Activated T-helper 2 cell treated with anti-CD3 and anti-CD28 coated beads, Interferon-gamma antibody, Interleukin-2, Interleukin-4, amounts not matched to agents 10 μg/mL and 5 μg/mL and 100 μg/mL, durations not matched to agents 14 hours and 24 hours and 36 hours (primary cell): ENCODE measurements at regions of chr9 and their contacts with region 1.

Region 1: DNA sequence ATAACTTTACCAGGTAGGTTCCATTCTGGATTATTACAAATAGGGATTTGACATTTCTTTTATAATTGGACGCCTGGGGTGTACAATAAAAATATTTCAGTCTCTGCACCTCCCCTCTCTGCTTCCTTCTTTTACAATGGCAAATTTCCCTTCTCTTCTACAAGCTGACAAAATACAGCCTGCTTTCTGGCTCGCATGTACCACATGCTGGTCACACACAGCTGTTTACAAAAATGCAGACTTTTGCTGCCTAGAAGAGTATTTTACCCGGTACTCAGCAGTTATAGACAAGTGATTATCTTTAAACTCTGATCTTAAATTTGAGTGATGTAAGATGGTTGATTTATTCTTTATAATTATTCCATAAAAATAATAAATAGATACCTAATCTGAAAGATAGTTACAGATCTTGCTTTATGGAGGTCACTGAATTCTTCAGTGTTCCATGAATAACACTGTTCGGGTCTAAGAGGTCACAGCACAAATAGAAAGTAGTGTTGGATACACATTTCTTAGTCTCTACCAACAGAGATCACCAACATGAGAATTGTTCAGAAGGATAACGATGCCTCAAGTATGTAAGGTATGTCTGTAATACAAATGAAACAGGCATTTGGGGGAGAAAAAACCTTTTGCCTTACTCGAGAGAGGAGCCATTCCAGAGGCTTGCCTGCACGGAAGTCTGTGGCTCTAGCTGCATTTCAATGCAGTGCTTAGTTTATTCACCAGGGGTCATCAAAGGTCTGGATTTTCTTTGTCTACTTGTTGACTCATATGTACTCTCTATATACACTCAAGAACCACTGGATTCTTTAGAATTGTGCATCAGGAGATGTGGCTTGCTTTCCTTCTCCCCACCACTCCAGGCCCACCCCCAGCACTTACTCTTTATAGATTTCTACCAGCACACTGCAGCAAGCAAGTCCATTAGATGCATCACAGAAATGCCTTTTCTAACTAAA is 206.6 kb upstream of the RFX3 start:
- DNase-seq: peak; percentile 42
- H3K4me3 Mint-ChIP-seq: peak overlapping the region; percentile 20
- H3K27ac Mint-ChIP-seq: peak overlapping the region; percentile 49
- H3K4me1 Mint-ChIP-seq: peaks cover 51% of the 10 kb centered on the region
- H3K27me3 Mint-ChIP-seq: no peaks in the 10 kb centered on the region

Region 2: DNA sequence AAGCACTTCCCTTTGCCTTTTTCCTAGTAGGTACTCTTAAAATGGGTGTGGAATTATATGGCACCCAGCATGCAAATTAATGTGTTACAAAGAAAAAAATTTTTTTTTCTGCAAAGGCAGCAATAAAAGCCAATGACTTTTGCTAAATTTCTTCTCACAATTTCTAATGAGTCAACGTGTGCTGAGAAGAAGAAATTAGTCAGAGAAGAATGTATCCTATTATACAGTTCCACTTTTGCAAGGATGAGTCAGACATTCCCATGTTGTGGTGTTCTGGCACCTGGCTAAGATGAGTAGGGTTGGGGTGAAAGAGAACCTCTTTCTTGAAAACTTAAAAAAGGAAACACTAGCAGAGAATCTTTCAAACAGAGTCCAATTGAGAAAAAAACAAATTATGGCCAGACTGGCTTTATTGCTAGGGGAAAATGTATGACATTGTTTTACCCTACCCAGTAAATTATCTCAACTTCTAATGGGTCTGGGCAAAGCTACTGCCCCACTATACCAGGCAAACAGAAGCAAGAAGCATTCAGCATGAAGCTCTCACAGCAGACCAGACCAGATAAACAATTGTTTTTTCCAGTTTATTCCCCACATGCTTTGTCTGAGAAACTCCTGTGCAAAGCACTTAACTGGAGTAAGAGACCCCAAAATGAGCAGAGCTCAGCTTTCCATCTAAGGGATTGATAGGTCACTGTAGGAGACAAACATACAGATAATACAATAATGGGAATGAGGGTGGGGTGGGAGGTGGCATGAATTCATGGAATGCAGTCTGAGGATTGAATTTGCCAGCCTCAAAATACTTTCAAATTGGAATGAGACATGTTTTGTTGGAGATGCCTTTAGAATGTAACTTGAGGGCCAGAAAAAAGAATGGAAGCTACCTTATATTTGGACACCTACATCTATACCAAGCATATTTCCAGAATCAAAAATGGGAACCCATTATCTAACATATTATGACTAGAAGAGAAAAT is 14.2 kb after region 1 on chr9:
- intact Hi-C with region 1: loop called (anchors 2 kb)
- DNase-seq: no peak
- H3K4me3 Mint-ChIP-seq: no peak overlapping the region
- H3K27ac Mint-ChIP-seq: peak overlapping the region; percentile 76
- H3K4me1 Mint-ChIP-seq: peaks cover 32% of the 10 kb centered on the region
- H3K27me3 Mint-ChIP-seq: no peaks in the 10 kb centered on the region

Region 3: DNA sequence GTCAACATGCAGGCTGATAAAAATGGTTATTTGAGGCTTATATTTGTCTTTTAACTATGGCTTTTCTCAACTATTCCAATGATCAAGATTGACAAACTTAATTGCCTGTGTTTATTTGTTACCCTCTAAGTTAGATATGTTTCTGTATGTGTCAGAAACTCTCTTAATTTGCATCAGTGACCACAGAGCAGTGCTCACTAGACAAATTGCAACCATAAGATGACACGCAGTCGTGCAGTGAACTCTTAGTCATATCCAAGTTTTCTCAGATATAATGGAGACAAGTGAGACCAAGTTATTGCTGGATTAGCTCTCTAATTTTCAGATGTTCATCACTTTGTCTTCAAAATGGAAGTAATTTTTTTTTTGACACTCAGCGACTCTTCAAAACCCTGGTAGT is 135.7 kb after region 1 on chr9:
- intact Hi-C with region 1: loop called (anchors 5 kb)
- DNase-seq: no peak
- H3K4me3 Mint-ChIP-seq: no peak overlapping the region
- H3K27ac Mint-ChIP-seq: no peak overlapping the region
- H3K4me1 Mint-ChIP-seq: peaks cover 57% of the 10 kb centered on the region
- H3K27me3 Mint-ChIP-seq: no peaks in the 10 kb centered on the region

Region 4: DNA sequence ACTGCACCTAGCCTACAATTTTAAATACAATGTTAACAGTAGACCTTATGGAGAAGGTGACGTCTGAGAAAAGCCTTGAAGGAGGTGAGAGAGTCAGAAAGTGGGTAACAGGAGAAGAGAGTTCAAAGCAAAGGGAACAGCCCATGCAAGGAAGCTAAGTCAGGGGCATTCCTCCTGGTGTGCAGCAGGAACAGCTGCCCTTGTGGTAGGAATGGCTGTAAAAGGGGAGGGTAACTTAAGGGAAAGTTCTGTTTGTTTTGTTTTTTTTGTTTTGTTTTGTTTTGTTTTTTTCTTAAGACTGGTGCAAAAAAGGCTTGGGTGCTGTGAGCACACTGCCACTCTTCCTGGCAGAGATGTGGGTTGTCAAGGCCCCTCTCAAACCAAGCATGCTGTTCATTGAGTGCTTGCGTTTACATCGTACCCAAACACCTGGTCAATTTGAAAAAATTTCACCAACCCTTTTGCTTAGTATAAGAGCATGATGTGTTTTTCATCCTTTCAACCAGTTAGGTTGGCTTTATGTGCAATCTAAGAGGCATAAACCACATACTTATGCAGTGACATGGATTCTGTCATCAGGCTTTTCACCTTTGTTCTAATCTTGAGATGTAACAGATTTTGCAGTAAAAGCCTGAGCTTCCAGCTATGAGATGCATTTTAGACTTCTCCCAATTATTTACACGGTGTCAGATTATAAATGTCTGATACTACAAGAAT is 287.8 kb after region 1 on chr9:
- intact Hi-C with region 1: loop called (anchors 2 kb)
- DNase-seq: no peak
- H3K4me3 Mint-ChIP-seq: no peak overlapping the region
- H3K27ac Mint-ChIP-seq: peak overlapping the region; percentile 7
- H3K4me1 Mint-ChIP-seq: peaks cover 8% of the 10 kb centered on the region
- H3K27me3 Mint-ChIP-seq: no peaks in the 10 kb centered on the region

Region 5: GRCh38 chr9:4117835-4118610 is 385.7 kb after region 1 on chr9:
- intact Hi-C with region 1: loop called (anchors 1 kb)
- DNase-seq: peak; percentile 18
- H3K4me3 Mint-ChIP-seq: no peak overlapping the region
- H3K27ac Mint-ChIP-seq: no peak overlapping the region
- H3K4me1 Mint-ChIP-seq: no peaks in the 10 kb centered on the region
- H3K27me3 Mint-ChIP-seq: peaks cover 3% of the 10 kb centered on the region

Region 6: DNA sequence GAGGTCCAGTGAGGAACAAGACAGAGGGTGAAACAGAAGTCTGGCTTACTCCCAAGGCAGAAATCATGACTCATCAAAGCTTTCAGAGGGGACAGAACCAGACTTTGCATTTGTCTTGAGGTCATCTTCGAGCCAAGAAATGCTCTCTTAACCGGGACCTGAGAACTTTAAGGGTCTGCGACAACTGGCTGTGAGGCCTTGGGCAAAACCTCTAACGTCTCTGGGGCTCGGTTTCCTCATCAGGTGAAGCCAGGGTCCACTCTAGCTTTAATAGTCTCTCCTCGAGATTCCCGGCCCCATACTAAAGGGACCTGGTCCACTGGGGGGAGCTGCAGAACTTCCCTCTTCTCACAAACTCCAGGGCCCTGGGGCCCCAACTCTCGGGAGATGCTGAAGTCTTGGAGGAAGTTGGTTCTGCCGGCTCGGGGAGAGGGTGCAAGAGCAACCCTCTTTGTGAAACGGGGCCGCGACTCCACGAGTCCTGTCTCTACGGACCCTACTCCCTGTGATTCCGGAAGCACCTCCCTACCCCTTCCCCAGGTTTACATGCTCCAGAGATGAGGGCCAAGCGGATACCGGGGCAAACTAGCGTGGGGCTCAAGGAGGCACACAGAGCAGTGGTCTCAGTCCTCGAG is 564.9 kb after region 1 on chr9:
- intact Hi-C with region 1: loop called (anchors 1 kb)
- DNase-seq: peak; percentile 22
- H3K4me3 Mint-ChIP-seq: peak overlapping the region; percentile 97
- H3K27ac Mint-ChIP-seq: peak overlapping the region; percentile 87
- H3K4me1 Mint-ChIP-seq: peaks cover 49% of the 10 kb centered on the region
- H3K27me3 Mint-ChIP-seq: peaks cover 56% of the 10 kb centered on the region

Region 7: DNA sequence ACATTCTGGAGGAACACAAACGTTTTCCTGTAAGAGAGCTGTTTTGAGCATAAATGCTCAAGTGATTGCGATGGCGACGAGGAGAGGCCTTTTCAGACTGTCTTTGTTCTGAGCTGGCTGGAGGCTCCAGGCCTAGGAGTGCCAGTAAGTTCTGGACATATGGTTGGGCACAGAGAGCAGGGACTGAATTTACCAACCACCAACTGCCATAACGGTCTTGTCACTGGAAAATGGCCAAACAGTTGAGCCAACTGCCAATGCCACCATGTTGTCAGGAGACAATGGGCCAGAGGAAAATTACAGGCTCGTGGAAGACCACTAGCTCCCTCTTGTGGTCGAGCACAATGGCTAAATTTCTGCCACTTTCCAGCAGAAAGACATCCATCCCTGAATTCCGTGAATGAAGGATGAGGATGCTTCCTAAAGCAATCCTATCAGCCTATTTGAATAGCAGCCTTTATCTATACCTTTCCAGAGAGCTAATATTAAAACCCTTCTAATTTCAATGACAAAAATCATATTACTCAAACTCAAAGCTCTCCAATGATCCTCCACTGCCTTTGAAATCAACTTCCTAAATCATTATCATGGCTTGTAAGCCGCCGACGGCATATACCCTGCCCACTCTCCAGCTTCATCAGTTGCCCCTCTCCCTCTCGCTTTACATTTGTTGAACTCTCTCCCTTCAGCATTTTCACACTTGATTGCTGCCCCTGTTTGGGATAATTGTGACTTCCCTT is 634.4 kb after region 1 on chr9:
- intact Hi-C with region 1: loop called (anchors 1 kb)
- DNase-seq: no peak
- H3K4me3 Mint-ChIP-seq: no peak overlapping the region
- H3K27ac Mint-ChIP-seq: no peak overlapping the region
- H3K4me1 Mint-ChIP-seq: peaks cover 9% of the 10 kb centered on the region
- H3K27me3 Mint-ChIP-seq: peaks cover 6% of the 10 kb centered on the region